Right ventricle myocardium superior (tissue), 1 donor: ENCODE measurements at regions of chr20 and their contacts with region 1.

Region 1: DNA sequence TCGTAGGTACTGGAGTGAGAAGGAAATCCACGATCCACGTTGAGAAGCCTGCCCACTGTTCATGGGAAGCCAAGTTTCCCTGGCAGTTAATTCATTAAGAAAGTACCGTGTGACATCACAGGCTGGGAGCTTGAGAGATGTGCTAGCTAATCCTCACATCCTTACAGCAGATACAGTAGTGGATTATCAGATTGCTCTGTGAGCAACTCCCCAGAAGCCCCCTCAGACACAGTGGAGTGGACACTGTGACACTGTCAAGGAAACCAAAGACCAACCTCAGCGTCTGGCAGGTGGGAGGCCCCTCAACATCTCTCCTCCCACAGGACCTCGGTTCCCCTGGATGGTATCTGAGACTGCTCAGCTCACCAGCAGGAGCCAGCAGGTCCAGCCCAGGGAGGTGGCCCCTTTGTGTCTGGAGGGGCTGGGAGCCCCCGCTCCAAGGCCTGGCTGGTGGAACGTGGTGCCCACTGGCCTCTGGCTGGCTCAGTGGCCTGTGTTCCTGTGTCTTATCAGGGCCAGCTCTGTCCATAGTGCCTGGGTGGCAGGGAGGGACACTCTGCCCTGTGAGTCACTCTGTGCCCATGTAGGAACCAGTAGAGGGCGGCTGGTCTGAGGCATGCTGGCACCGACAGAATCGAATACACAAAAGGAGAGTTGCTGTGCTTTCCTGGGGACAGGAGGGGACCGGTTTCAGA is 7.2 kb downstream of the PYGB start:
- DNase-seq: peak; percentile 77
- ATAC-seq: peak; percentile 87

Region 2: GRCh38 chr20:25057234-25058050 is 197.7 kb before region 1 on chr20:
- intact Hi-C with region 1: loop called (anchors 10 kb)
- DNase-seq: peak; percentile 86
- ATAC-seq: peak; percentile 76

Region 3: GRCh38 chr20:25294459-25295385 is 39.6 kb after region 1 on chr20:
- intact Hi-C with region 1: loop called (anchors 5 kb)
- DNase-seq: no peak
- ATAC-seq: peak; percentile 24